Activated CD8-positive, alpha-beta T cell treated with anti-CD3 and anti-CD28 coated beads, Interleukin-2, amount 10 ng/mL, durations not matched to agents 7 days and 5 days (primary cell): ENCODE measurements at regions of chr20 and their contacts with region 1.

Region 1: GRCh38 chr20:41173161-41173721 is 35.9 kb downstream of the PLCG1 start:
- DNase-seq: peak; percentile 73
- ATAC-seq: peak; percentile 85
- H3K4me3 Mint-ChIP-seq: no peak overlapping the region
- H3K27ac Mint-ChIP-seq: peak overlapping the region; percentile 78
- H3K4me1 Mint-ChIP-seq: peaks cover 50% of the 10 kb centered on the region
- H3K27me3 Mint-ChIP-seq: no peaks in the 10 kb centered on the region

Region 2: DNA sequence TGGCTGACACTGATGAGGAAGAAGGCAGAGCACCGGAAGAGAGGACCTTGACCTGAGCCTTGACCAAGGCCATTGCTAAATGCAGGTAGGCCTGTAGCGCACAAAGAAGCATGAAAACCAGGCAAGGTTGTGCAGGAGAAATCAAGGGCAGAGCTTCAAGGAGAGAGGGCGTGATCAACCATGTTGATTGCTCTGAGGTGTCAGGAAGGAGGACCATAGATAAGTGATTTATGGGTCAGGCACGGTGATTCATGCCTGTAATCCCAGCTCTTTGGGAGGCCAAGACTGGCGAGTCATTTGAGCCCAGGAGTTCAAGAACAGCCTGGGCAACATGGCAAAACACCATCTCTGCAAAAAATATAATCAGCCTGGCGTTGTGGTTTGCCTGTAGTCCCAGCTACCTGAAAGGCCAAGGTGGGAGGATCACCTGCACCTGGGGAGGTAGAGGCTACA is 23.5 kb before region 1 on chr20:
- CTCF ChIA-PET with region 1: interaction called, 78 read pairs
- POLR2A ChIA-PET with region 1: no interaction called
- DNase-seq: no peak
- ATAC-seq: no peak
- H3K4me3 Mint-ChIP-seq: peak overlapping the region; percentile 0
- H3K27ac Mint-ChIP-seq: peak overlapping the region; percentile 81
- H3K4me1 Mint-ChIP-seq: peaks cover 94% of the 10 kb centered on the region
- H3K27me3 Mint-ChIP-seq: no peaks in the 10 kb centered on the region

Region 3: DNA sequence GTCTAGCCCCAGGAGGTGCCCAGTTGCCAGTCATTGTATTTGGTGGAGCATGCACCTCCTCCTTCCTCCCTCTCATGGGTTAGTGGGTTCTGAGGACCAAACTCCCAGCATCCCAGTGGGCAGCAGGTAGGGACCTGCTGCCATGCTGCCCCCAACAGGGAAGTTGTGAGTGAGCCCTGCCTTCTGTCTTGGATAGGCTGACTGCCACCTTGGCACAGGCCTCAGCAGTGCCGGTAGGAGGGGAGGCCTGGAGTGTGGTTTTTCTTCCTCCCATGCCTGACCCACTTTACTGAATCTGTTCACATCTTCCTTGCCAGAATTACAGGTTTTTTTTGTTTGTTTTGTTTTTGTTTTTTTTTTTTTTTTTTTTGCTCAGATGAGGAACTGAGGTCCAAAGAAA is 11.4 kb before region 1 on chr20:
- CTCF ChIA-PET with region 1: interaction called, 78 read pairs
- POLR2A ChIA-PET with region 1: interaction called, 11 read pairs
- DNase-seq: no peak
- ATAC-seq: no peak
- H3K4me3 Mint-ChIP-seq: no peak overlapping the region
- H3K27ac Mint-ChIP-seq: peak overlapping the region; percentile 71
- H3K4me1 Mint-ChIP-seq: peaks cover 92% of the 10 kb centered on the region
- H3K27me3 Mint-ChIP-seq: no peaks in the 10 kb centered on the region

Region 4: GRCh38 chr20:41232973-41233926 is 60.0 kb after region 1 on chr20:
- CTCF ChIA-PET with region 1: interaction called, 44 read pairs
- POLR2A ChIA-PET with region 1: interaction called, 3 read pairs
- DNase-seq: no peak
- ATAC-seq: no peak
- H3K4me3 Mint-ChIP-seq: no peak overlapping the region
- H3K27ac Mint-ChIP-seq: no peak overlapping the region
- H3K4me1 Mint-ChIP-seq: peaks cover 38% of the 10 kb centered on the region
- H3K27me3 Mint-ChIP-seq: no peaks in the 10 kb centered on the region

Region 5: DNA sequence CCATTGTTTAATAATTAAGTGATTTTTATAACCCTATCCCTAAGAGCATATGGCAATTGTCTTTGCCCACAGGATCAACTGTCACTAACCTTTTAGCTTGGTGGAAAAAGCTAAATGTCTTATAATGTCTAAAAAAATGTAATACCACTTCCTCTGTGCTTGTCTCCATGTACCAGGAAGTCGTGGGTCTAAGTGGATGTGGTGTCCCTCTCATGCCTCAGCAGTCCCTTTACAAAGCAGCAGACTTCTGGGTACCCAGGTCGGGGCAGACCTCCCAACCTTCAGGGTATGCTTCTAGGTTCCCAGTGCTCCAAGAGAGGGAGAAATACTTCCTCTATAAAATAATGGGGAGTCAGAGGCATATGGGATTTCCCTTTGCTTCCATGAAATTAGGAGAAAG is 69.6 kb after region 1 on chr20:
- CTCF ChIA-PET with region 1: interaction called, 18 read pairs
- POLR2A ChIA-PET with region 1: no interaction called
- DNase-seq: peak; percentile 59
- ATAC-seq: peak; percentile 85
- H3K4me3 Mint-ChIP-seq: no peak overlapping the region
- H3K27ac Mint-ChIP-seq: peak overlapping the region; percentile 43
- H3K4me1 Mint-ChIP-seq: peaks cover 41% of the 10 kb centered on the region
- H3K27me3 Mint-ChIP-seq: no peaks in the 10 kb centered on the region

Region 6: GRCh38 chr20:41329435-41330342 is 156.4 kb after region 1 on chr20:
- CTCF ChIA-PET with region 1: interaction called, 11 read pairs
- POLR2A ChIA-PET with region 1: no interaction called
- DNase-seq: peak; percentile 78
- ATAC-seq: peak; percentile 100
- H3K4me3 Mint-ChIP-seq: no peak overlapping the region
- H3K27ac Mint-ChIP-seq: peak overlapping the region; percentile 73
- H3K4me1 Mint-ChIP-seq: peaks cover 18% of the 10 kb centered on the region
- H3K27me3 Mint-ChIP-seq: peaks cover 4% of the 10 kb centered on the region

Region 7: DNA sequence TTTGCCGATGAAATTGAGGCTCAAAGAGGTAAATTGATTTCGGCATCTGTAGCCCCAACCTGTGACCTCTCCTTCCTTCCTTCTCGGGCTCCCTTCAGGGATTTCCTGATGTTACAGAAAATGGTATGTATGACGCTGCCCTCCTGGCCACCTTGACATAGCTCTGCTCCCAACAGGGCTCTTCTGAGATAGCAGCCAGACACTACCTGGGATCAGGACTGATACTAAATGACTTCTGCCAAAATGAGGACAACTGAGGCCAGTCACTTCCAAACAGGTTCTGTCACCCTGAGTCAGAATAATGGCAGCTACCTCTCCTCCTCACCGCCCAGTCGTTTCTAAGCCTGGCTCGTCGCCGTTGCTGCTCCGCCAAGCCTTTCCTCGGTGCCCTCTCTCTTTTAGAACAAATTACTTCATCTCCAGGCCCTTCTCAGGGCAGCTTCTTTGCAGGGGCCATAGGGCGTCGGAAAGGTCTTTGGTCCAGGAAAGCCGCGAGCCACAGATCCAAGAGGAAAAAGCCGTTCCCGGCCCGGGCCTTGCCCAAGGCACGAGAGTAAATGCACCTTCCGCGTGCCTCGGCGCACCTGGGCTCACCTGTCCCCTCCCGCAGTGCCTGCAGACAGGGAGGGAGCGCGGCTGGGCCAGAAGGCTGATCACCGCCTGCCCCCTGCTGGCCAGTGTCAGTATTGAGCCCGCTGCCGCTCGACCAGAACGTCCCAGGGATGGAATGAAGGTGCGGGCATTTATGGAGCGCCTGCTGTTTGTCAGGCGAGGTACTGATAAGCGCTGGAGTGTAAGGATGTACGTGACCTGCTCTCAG is 166.5 kb after region 1 on chr20:
- CTCF ChIA-PET with region 1: interaction called, 34 read pairs
- POLR2A ChIA-PET with region 1: no interaction called
- DNase-seq: peak; percentile 87
- ATAC-seq: peak; percentile 95
- H3K4me3 Mint-ChIP-seq: peak overlapping the region; percentile 66
- H3K27ac Mint-ChIP-seq: peak overlapping the region; percentile 24
- H3K4me1 Mint-ChIP-seq: peaks cover 13% of the 10 kb centered on the region
- H3K27me3 Mint-ChIP-seq: peaks cover 8% of the 10 kb centered on the region